ENCODE measurements at regions of chr12 and their contacts with region 1.

Region 1: GRCh38 chr12:30746190-30746589 is 8.6 kb downstream of the CAPRIN2 start:
- DNase-seq: no peak
- ATAC-seq: no peak
- H3K4me3 ChIP-seq: no peak overlapping the region
- H3K27ac ChIP-seq: no peak overlapping the region
- H3K4me1 ChIP-seq: peaks cover 0 to 9% (median 3%) of the 10 kb centered on the region in 9 donors
- H3K27me3 ChIP-seq: no peaks in the 10 kb centered on the region
- CTCF ChIP-seq: no peak

Region 2: DNA sequence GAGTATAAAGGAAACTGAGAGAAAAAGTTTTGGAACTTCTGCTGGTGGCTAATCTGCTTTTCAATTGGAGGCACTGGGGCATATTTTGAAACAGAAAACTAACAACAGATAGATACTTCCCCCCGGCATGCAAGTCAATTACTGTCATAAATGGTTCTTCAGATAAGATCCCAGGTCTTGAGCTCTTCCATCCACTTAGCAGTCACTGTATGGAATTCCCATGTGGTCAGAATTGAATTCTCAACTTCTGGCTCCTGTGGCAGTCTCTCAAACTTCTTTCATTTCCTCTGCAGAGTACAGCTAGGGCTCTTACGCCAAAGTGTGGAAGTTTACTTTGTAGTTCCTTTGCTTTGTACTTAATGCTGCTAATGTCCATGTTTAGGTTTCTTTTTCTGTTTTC is 502.8 kb before region 1 on chr12:
- intact Hi-C with region 1: no loop called
- DNase-seq: no peak
- ATAC-seq: no peak
- H3K4me3 ChIP-seq: no peak overlapping the region
- H3K27ac ChIP-seq: no peak overlapping the region
- H3K4me1 ChIP-seq: no peaks in the 10 kb centered on the region
- H3K27me3 ChIP-seq: peaks cover 0 to 5% (median 0%) of the 10 kb centered on the region in 7 donors
- CTCF ChIP-seq: no peak

Region 3: DNA sequence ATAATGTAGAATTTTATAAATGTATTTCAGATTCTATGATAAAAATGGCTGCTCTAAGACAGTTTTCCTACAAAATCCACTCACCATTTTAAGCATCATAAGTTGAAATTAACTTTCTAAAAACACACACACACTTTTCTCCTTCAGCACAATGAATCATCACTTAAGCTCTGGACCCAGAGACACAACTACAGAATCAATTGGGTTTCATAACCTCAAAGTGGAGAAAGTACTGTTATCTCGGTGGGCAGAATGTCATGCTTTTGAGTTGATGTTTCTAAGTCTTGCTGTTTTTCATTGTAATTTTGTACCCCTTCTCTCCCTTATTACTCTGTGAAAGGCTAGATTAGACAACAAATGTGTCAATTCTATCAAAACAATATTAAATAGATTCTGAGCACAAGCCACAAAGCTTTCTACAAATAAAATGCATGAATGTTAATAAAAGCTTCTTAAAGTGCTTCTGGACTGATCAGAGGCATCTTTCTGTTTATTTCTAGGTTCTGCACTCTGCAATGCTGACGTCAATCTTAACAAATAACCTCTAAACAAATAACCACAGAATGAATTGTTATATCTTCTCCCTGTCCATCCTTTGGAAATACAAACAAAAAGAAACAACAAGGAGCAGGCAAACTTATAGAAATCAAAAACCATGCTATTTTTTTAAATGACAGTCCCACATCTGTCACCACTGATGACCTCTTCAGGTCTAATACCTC is 58.8 kb before region 1 on chr12:
- intact Hi-C with region 1: loop called in 3 of 10 experiments (anchors 5 to 10 kb)
- DNase-seq: no peak
- ATAC-seq: no peak
- H3K4me3 ChIP-seq: no peak overlapping the region
- H3K27ac ChIP-seq: no peak overlapping the region
- H3K4me1 ChIP-seq: peaks cover 0 to 39% (median 14%) of the 10 kb centered on the region in 9 donors
- H3K27me3 ChIP-seq: no peaks in the 10 kb centered on the region
- CTCF ChIP-seq: no peak

Measured in heart right ventricle (tissue), 16 donors.